Activated T-helper 1 cell treated with anti-CD3 and anti-CD28 coated beads, Interleukin-12 subunit alpha, Interleukin-12 subunit beta, Interleukin-2, Interleukin-4 antibody, amounts not matched to agents 30 ng/mL and 10 ng/mL and 1 ng/mL, durations not matched to agents 14 hours and 24 hours and 36 hours (primary cell): ENCODE measurements at regions of chr5 and their contacts with region 1.

Region 1: DNA sequence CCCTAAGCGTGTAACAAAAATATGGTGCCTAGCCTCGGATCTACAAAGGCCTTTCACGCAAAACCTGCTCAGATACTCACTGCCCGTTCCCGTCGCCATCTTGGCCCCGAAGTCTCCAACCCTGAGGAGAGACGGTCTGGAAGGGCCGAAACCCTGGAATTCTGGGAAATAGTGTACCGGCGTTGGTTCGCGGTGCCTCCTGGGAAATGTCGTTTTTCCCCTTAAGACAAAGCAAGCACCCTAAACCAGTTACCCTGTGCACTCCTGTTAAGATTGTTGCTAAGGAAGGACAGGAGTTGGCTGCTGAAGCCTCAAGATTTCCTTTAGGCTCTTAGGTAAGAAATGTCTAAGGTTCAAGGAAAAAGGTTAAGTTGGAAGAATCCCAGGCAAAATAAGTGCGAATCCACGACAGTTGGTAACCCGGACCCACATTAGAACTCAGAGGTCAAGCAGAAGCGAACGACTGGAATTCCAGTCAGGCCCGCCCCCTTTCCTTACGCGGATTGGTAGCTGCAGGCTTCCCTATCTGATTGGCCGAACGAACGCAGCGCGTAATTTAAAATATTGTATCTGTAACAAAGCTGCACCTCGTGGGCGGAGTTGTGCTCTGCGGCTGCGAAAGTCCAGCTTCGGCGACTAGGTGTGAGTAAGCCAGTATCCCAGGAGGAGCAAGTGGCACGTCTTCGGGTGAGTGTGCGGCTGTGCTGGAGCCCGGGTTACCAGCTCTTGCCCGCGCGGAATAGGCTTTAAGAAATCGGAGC is at the starts of genes BRD8 and KIF20A:
- DNase-seq: peak; percentile 87
- H3K4me3 Mint-ChIP-seq: no peak within 1 kb of the TSS
- H3K27ac Mint-ChIP-seq: peak within 1 kb of the TSS; percentile 61
- H3K4me1 Mint-ChIP-seq: peaks cover 11% of the 10 kb centered on the region
- H3K27me3 Mint-ChIP-seq: no peaks in the 10 kb centered on the region
- total RNA-seq, gene BRD8: 51.8 and 57.9 TPM in 2 replicates
- total RNA-seq, gene KIF20A: 17.4 and 18.8 TPM in 2 replicates

Region 2: DNA sequence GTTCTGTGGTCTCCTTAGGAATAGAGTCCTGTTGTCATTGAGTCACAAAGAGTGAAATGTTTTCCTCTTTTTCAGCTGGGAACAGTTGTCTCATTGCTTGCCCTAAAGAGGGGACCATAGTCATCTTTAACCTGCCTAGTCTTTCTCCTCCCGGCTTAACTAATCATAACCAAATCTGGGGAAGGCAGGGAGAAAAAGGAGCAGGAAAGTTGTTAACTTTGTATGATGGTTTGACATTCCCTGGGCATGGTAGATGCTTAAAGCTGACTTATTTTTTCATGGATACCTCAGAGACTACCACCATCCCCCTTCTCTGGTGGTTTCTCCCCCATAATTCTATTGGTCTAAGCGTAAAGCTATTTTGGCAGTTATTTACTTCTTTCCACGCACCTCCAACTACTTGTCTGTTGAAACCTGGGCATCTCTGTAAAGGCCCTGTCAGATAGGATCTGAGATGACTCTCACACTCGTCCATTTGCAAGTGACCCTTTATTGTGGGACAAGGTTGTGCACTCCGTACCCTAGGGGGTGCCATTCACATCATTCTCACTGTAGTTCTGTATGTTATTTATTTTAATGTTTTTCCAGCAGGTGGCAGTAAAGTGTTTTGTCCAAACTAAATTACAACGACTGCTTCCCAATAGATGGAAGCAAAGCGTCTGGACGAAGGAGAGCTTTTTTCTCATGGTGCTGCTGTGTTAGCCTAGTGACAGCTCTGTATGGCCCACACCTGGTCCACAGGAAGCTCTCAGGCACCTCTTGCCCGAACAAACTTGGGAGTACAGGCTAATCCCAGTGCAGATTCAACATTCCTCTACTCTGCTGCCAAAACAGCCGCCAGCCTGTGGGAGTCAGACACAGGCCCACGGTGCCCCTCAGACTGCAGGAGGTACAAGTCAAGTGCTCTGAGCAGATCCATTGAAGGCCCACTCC is 142.8 kb before region 1 on chr5:
- intact Hi-C with region 1: loop called (anchors 1 kb)
- DNase-seq: peak; percentile 60
- H3K4me3 Mint-ChIP-seq: peak overlapping the region; percentile 38
- H3K27ac Mint-ChIP-seq: peak overlapping the region; percentile 72
- H3K4me1 Mint-ChIP-seq: peaks cover 46% of the 10 kb centered on the region
- H3K27me3 Mint-ChIP-seq: no peaks in the 10 kb centered on the region

Region 3: DNA sequence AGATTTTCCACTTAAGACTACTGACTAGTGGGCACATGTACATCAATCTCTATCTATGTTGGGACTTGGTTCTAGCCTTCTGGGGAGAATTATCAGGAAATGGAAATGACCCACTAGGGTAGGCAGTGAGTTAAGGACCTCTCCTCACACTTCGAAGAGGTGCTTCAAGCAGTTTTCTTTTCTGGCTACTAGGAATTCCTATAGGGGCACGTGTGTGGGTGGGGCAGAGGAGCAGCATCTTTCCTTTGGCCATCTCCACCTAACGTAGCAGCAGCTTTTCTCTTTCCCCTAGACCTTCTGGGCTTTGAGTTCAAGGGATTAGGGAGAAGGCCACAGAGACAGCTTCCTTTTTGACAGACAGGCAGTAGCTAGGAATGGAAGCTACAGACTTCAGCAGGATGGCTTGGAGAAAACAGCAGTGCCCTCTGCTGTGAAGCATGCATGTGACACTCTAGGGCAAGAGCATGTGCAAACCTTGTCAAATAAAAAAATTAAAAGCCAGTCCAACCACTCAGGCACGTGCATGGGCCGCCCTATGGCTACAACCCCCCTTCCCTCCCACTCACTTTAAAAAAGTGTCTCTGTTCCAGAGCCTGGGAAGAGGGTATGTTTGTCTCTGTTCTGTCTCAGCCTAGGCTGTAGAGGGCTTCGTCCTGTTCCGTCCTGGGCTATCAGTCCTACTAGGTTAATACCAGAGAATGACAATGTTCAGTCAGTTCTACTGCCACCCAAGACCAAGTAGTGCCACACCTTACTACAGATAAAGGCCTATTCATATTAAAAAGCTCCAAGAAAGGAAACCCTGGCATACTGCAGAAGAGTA is 104.4 kb after region 1 on chr5:
- intact Hi-C with region 1: loop called (anchors 1 kb)
- DNase-seq: no peak
- H3K4me3 Mint-ChIP-seq: no peak overlapping the region
- H3K27ac Mint-ChIP-seq: no peak overlapping the region
- H3K4me1 Mint-ChIP-seq: no peaks in the 10 kb centered on the region
- H3K27me3 Mint-ChIP-seq: no peaks in the 10 kb centered on the region

Region 4: DNA sequence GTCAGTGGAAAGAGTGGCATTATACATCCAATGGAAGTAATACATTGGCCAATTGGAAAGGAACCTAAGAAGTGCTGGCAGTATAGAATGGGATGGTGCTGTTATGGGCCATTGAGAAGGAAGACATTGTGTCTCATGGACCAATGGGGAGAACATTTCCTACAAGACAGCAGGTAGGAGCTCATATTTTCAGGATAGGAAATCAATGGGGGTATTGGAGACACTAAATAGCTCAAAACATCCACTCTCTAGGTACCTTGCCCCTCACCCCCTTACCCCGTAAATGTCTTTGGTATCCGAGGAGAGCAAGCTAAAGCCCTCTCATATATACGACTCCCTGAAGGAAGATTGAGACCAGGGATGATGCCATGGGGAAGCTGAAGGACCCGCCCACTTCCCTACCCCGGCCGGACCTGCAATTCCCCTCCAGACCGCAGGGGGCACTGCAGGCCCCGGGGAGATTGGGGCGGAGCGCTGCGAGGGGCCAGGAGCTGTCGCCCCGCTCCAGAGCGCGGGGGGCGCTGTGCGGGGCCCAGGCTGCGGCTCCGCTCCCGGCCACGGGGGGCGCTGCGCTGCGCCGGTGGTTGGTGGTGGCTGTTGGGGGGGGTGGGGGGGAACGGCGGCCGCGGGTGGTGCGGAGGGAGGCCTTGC is 173.5 kb after region 1 on chr5 and contains the start of gene KDM3B:
- intact Hi-C with region 1: loop called (anchors 1 kb)
- DNase-seq: peak; percentile 93
- H3K4me3 Mint-ChIP-seq: peak within 1 kb of the TSS; percentile 100
- H3K27ac Mint-ChIP-seq: peak within 1 kb of the TSS; percentile 97
- H3K4me1 Mint-ChIP-seq: peaks cover 51% of the 10 kb centered on the region
- H3K27me3 Mint-ChIP-seq: peaks cover 3% of the 10 kb centered on the region
- total RNA-seq, gene KDM3B: 55.0 and 59.3 TPM in 2 replicates

Region 5: GRCh38 chr5:138491669-138492559 is 313.2 kb after region 1 on chr5:
- intact Hi-C with region 1: loop called (anchors 2 kb)
- DNase-seq: peak; percentile 83
- H3K4me3 Mint-ChIP-seq: peak overlapping the region; percentile 89
- H3K27ac Mint-ChIP-seq: peak overlapping the region; percentile 68
- H3K4me1 Mint-ChIP-seq: peaks cover 8% of the 10 kb centered on the region
- H3K27me3 Mint-ChIP-seq: peaks cover 34% of the 10 kb centered on the region

Region 6: GRCh38 chr5:138549414-138549813 is 370.7 kb after region 1 on chr5:
- intact Hi-C with region 1: loop called (anchors 2 kb)
- DNase-seq: no peak
- H3K4me3 Mint-ChIP-seq: no peak overlapping the region
- H3K27ac Mint-ChIP-seq: peak overlapping the region; percentile 4
- H3K4me1 Mint-ChIP-seq: peaks cover 30% of the 10 kb centered on the region
- H3K27me3 Mint-ChIP-seq: no peaks in the 10 kb centered on the region